Transverse colon (tissue), 4 donors: ENCODE measurements at regions of chr15 and their contacts with region 1.

Region 1: DNA sequence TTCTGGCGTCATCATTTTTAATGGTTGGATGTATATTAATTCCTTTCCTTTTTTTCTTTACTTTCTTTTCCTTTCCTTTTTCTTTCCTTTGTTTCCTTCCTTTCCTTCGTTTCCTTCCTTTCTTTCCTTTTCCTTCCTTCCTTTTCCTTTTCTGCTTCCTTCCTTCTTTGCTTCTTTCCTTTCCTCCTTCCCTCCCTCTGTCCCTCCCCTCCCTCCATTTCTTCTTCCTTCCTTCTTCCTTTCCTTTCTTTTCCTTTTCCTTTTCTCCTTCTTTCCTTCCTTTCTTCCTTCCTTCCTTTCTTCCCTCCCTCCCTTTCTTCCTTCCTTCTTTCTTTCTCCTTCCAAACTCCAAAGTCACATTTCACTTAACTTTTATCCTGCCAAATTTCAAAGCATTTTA is 54.9 kb upstream of the LYSMD4 start:
- DNase-seq: no peak
- H3K4me3 ChIP-seq: no peak overlapping the region
- H3K27ac ChIP-seq: no peak overlapping the region
- H3K4me1 ChIP-seq: no peaks in the 10 kb centered on the region
- H3K27me3 ChIP-seq: no peaks in the 10 kb centered on the region
- CTCF ChIP-seq: no peak
- EP300 ChIP-seq: no peak
- POLR2A ChIP-seq: no peak

Region 2: DNA sequence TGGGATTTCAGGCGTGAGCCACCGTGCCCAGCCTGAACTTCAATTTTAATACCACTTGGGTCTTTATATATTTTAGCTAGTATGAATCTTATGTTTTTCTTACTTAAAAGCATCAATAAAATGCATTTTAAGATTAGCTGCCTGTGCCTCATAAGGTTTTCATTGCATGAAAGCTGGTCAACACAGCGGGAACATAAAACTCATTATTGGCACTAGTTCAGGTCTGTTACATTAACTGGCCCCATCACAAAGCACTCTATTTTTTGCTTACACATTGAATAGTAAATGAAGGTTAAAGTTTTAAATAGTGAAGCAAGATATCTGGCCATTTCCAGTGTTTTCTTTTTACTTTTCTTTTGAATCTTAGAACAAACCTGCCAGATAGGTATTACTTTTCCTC is 90.7 kb after region 1 on chr15:
- in situ Hi-C with region 1: no loop called
- intact Hi-C with region 1: no loop called
- DNase-seq: no peak
- H3K4me3 ChIP-seq: no peak overlapping the region
- H3K27ac ChIP-seq: no peak overlapping the region
- H3K4me1 ChIP-seq: no peaks in the 10 kb centered on the region
- H3K27me3 ChIP-seq: no peaks in the 10 kb centered on the region
- CTCF ChIP-seq: no peak
- EP300 ChIP-seq: no peak
- POLR2A ChIP-seq: no peak

Region 3: GRCh38 chr15:101765772-101766456 is 1977.7 kb after region 1 on chr15:
- in situ Hi-C with region 1: loop called in 1 of 4 experiments (anchors 10 kb)
- intact Hi-C with region 1: no loop called
- DNase-seq: no peak
- H3K4me3 ChIP-seq: no peak overlapping the region
- H3K27ac ChIP-seq: no peak overlapping the region
- H3K4me1 ChIP-seq: no peaks in the 10 kb centered on the region
- H3K27me3 ChIP-seq: no peaks in the 10 kb centered on the region
- CTCF ChIP-seq: no peak
- EP300 ChIP-seq: no peak
- POLR2A ChIP-seq: no peak